MCF 10A (cell line): ENCODE measurements at regions of chr3 and their contacts with region 1.

Region 1: GRCh38 chr3:138271189-138271794 is 58.4 kb downstream of the NME9 start:
- DNase-seq: no peak
- H3K4me3 Mint-ChIP-seq: no peak overlapping the region
- H3K27ac Mint-ChIP-seq: peak overlapping the region; percentile 37
- H3K4me1 Mint-ChIP-seq: no peaks in the 10 kb centered on the region
- H3K27me3 Mint-ChIP-seq: no peaks in the 10 kb centered on the region
- CTCF ChIP-seq: no peak

Region 2: GRCh38 chr3:138180375-138181029 is 90.8 kb before region 1 on chr3:
- CTCF ChIA-PET with region 1: interaction called, 5 read pairs
- POLR2A ChIA-PET with region 1: interaction called, 4 read pairs
- intact Hi-C with region 1: loop called (anchors 2 kb)
- DNase-seq: peak; percentile 61
- H3K4me3 Mint-ChIP-seq: no peak overlapping the region
- H3K27ac Mint-ChIP-seq: no peak overlapping the region
- H3K4me1 Mint-ChIP-seq: no peaks in the 10 kb centered on the region
- H3K27me3 Mint-ChIP-seq: peaks cover 11% of the 10 kb centered on the region
- CTCF ChIP-seq: peak; percentile 48

Region 3: DNA sequence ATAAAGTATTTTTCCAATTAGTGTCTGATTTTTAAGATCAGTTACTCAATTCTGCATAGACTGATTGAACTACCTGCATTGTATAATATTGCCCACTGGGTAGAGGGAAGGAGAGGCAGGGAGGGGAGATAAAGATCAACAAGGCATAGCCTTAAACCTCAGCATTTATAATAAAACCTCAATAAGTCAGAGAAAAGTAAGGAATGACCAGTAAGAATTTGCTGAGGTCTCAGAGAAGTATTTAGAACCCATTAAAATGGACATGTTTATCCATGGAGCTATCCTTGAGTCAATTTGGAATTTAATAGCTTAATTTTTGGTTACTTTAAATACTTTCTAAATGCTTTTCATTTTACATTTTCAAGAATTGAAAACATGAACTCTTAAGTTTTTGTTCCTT is 21.7 kb before region 1 on chr3:
- CTCF ChIA-PET with region 1: no interaction called
- POLR2A ChIA-PET with region 1: no interaction called
- intact Hi-C with region 1: no loop called
- DNase-seq: no peak
- H3K4me3 Mint-ChIP-seq: no peak overlapping the region
- H3K27ac Mint-ChIP-seq: no peak overlapping the region
- H3K4me1 Mint-ChIP-seq: no peaks in the 10 kb centered on the region
- H3K27me3 Mint-ChIP-seq: no peaks in the 10 kb centered on the region
- CTCF ChIP-seq: no peak